ENCODE measurements at regions of chr10 and their contacts with region 1.

Region 1: DNA sequence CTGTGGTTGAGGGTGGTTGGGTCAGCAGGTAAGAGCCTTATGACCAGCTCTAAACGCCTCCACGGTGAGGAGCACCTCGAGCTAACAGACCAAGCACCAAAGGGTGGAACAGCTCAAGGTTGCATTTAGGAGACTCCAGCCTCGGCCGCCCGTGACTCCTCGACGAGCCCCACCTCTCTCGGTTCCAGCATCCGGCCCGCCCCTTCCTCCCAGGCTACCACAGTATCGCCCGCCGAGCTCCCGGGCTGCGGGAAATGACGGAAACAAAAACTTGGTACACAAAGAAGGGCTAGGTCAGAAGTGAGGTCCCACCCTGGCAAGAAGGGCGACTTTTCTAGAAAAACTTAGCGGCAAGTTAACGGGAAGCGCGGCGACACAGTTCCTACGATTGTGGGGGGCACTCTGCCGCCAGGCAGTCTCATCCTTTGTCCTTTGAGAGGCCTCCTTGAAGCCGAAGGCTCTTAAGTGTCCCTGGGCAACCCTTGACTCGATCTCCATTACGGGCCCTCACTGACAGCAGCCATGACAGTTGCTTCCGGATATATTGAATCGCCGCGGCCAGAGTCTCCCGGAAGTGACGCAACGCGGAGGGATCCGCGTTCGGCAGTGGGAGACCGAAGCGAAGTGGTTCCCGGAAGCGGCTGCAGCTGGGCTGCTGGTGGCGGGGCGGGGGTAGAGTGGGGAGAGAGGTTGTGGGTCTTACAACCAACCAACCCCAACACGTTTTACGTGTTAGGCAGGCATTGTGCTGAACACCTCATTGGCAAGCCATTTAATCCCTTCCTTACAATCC is 40.2 kb upstream of the ZNF518A start:
- DNase-seq: peak; percentile 86 to 96 (median 92)

Region 2: GRCh38 chr10:95963226-95963990 is 126.5 kb before region 1 on chr10:
- intact Hi-C with region 1: no loop called
- DNase-seq: no peak

Region 3: GRCh38 chr10:96129387-96130325 is 39.8 kb after region 1 on chr10 and contains the start of gene ZNF518A:
- intact Hi-C with region 1: loop called (anchors 2 kb)
- DNase-seq: peak; percentile 78 to 96 (median 92)